ENCODE measurements at regions of chr3 and their contacts with region 1.

Region 1: GRCh38 chr3:195259475-195260279 is 11.3 kb downstream of the XXYLT1 start:
- DNase-seq: peak; percentile 91 to 94 (median 93)
- ATAC-seq: peak; percentile 70 to 90 (median 88)
- H3K4me3 ChIP-seq: peak overlapping the region; percentile 21 to 78 (median 68)
- H3K27ac ChIP-seq: peak overlapping the region; percentile 80 to 97 (median 91)
- H3K4me1 ChIP-seq: peaks cover 0 to 37% (median 22%) of the 10 kb centered on the region in 12 donors
- H3K27me3 ChIP-seq: no peaks in the 10 kb centered on the region
- CTCF ChIP-seq: peak in 11 of 12 donors; percentile 15 to 99 (median 81)
- POLR2A ChIP-seq: peak in 1 of 2 donors; percentile 55

Region 2: GRCh38 chr3:194682694-194683310 is 576.9 kb before region 1 on chr3:
- intact Hi-C with region 1: loop called (anchors 2 to 5 kb)
- DNase-seq: peak; percentile 67 to 75 (median 71)
- ATAC-seq: peak; percentile 41 to 79 (median 61)
- H3K4me3 ChIP-seq: no peak overlapping the region
- H3K27ac ChIP-seq: peak overlapping the region in 8 of 12 donors; percentile 5 to 61 (median 40)
- H3K4me1 ChIP-seq: peaks cover 4 to 34% (median 22%) of the 10 kb centered on the region in 12 donors
- H3K27me3 ChIP-seq: no peaks in the 10 kb centered on the region
- CTCF ChIP-seq: peak; percentile 74 to 96 (median 88)
- POLR2A ChIP-seq: no peak

Region 3: DNA sequence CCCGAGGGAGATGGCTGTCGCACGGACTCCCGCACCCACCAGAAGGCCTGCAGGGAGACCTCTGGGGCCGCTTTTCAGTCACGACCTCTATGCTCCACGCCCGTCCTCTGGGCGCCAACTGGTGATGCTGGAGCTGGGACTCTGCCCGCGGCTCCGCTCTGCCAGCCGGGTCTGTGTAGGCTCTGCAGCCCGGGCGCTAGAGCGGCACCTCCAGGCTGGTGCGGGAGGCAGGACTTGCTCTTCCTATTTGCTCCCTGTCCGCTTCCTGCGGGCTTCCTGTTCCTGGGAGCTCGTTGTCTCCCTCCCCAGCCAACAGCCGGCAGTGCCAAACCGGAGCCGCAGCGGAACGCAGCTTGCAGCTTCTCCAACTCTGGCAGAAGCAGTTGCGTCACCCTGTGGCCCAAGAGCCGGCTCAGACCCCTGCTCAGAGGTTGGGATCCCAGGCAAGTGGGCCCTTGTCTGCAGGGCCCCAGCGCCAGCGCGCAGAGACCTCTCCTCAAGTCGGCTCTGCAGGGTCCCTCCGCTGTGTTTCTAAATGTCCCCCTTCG is 274.6 kb before region 1 on chr3:
- intact Hi-C with region 1: loop called in 1 of 10 experiments (anchors 5 kb)
- DNase-seq: peak; percentile 69 to 92 (median 80)
- ATAC-seq: peak; percentile 82 to 96 (median 91)
- H3K4me3 ChIP-seq: peak overlapping the region in 10 of 12 donors; percentile 20 to 46 (median 36)
- H3K27ac ChIP-seq: peak overlapping the region in 4 of 12 donors; percentile 1 to 55 (median 31)
- H3K4me1 ChIP-seq: peaks cover 0 to 15% (median 13%) of the 10 kb centered on the region in 12 donors
- H3K27me3 ChIP-seq: no peaks in the 10 kb centered on the region
- CTCF ChIP-seq: peak; percentile 19 to 61 (median 46)
- POLR2A ChIP-seq: no peak

Region 4: DNA sequence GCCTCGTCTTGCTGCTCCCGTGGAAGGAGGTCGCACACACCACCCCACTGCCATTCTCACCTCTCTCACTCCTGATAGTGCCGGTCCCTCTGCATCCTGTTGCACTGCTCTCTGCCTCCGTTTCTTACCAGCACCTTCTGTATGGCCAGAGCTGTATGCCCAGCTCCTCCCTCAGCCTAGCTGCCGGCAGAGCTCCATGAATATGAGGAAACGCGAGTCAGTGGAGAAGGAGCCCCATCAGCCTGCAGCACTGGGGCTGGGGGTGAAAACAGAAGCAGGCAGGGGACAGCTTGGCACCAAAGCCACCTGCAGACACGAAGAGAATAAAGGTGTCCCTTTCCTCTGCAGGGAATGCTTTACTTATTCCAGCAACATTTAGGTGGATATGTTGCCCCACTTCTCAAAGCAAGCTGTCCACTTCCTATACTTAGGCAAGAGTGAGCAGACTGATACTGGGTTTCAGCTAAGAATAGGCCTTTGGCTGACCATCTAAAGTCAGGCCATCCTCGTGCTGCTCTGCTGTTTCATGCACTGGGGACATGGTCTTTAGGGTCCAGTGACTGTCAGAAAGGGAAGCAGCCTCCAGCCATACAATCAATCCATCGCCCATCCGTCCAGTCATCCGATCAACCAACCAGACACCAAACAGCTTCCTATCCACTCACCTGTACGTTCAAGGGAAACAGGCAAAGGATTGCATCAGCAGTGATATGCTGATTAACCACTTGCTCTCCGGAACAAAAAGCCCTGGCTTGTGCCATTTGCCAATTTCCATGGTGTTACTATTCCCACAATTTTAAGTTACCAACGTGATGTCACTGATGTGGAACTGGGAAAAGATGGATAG is 211.4 kb before region 1 on chr3:
- intact Hi-C with region 1: no loop called
- DNase-seq: no peak
- ATAC-seq: peak in 3 of 4 donors; percentile 57 to 66 (median 62)
- H3K4me3 ChIP-seq: no peak overlapping the region
- H3K27ac ChIP-seq: no peak overlapping the region
- H3K4me1 ChIP-seq: peaks cover 0 to 8% (median 0%) of the 10 kb centered on the region in 12 donors
- H3K27me3 ChIP-seq: no peaks in the 10 kb centered on the region
- CTCF ChIP-seq: no peak
- POLR2A ChIP-seq: no peak

Region 5: GRCh38 chr3:195094171-195094921 is 165.3 kb before region 1 on chr3:
- intact Hi-C with region 1: no loop called
- DNase-seq: peak in 1 of 5 donors; percentile 18
- ATAC-seq: no peak
- H3K4me3 ChIP-seq: no peak overlapping the region
- H3K27ac ChIP-seq: no peak overlapping the region
- H3K4me1 ChIP-seq: peaks cover 0 to 21% (median 8%) of the 10 kb centered on the region in 12 donors
- H3K27me3 ChIP-seq: no peaks in the 10 kb centered on the region
- CTCF ChIP-seq: no peak
- POLR2A ChIP-seq: no peak

Region 6: GRCh38 chr3:195113044-195113443 is 146.6 kb before region 1 on chr3:
- intact Hi-C with region 1: loop called in 8 of 10 experiments (anchors 2 to 10 kb)
- DNase-seq: no peak
- ATAC-seq: no peak
- H3K4me3 ChIP-seq: no peak overlapping the region
- H3K27ac ChIP-seq: no peak overlapping the region
- H3K4me1 ChIP-seq: peaks cover 0 to 14% (median 6%) of the 10 kb centered on the region in 12 donors
- H3K27me3 ChIP-seq: no peaks in the 10 kb centered on the region
- CTCF ChIP-seq: no peak
- POLR2A ChIP-seq: no peak

Region 7: DNA sequence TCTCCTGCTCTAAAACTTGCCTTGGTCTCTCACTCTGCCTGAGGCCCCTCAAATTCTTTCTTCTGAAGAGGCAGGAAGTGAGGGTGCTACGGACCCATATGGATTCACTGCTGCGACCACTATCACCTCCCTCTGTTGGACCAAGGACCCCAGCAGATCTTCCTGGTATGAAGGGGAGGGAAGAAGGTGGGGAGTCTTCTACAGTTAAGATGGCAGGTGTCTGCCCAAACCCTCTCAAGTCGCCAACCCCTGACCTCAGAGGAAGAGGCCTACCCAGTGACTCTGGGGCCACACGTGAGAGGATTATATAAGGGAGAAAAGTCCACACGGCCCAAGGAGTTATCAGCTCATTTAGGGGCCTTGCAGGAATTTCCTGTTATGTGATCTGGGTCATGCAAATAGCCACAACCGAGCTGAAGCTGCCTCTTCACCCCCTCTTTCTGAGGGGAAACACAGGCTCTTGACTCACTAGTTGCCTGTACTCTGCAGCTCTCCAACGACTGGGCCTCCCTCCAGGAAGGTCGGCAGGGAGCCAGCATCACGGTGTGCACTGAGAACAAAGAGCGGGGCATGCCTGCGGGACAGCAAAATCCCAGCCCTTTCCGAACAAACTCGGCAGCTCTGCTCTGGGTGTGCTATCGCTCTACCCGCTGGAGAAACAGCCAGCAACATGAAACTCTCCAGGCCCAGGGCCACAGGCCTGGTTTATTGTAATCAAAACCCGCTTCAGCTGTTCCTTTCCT is 104.7 kb before region 1 on chr3:
- intact Hi-C with region 1: loop called in 6 of 10 experiments (anchors 2 to 10 kb)
- DNase-seq: peak; percentile 90 to 92 (median 91)
- ATAC-seq: peak; percentile 62 to 82 (median 75)
- H3K4me3 ChIP-seq: no peak overlapping the region
- H3K27ac ChIP-seq: peak overlapping the region; percentile 41 to 92 (median 85)
- H3K4me1 ChIP-seq: peaks cover 14 to 80% (median 66%) of the 10 kb centered on the region in 12 donors
- H3K27me3 ChIP-seq: no peaks in the 10 kb centered on the region
- CTCF ChIP-seq: no peak
- POLR2A ChIP-seq: no peak